ENCODE measurements at regions of chr10 and their contacts with region 1.

Region 1: GRCh38 chr10:122565728-122566206 is 5.2 kb downstream of the DMBT1 start:
- DNase-seq: peak; percentile 86
- H3K4me3 ChIP-seq: no peak overlapping the region
- H3K27ac ChIP-seq: no peak overlapping the region
- H3K4me1 ChIP-seq: peaks cover 6% of the 10 kb centered on the region
- H3K27me3 ChIP-seq: peaks cover 41% of the 10 kb centered on the region
- CTCF ChIP-seq: peak; percentile 87

Region 2: GRCh38 chr10:122191936-122192541 is 373.7 kb before region 1 on chr10:
- CTCF ChIA-PET with region 1: no interaction called
- POLR2A ChIA-PET with region 1: no interaction called
- intact Hi-C with region 1: no loop called
- DNase-seq: no peak
- H3K4me3 ChIP-seq: no peak overlapping the region
- H3K27ac ChIP-seq: no peak overlapping the region
- H3K4me1 ChIP-seq: no peaks in the 10 kb centered on the region
- H3K27me3 ChIP-seq: no peaks in the 10 kb centered on the region
- CTCF ChIP-seq: no peak

Region 3: DNA sequence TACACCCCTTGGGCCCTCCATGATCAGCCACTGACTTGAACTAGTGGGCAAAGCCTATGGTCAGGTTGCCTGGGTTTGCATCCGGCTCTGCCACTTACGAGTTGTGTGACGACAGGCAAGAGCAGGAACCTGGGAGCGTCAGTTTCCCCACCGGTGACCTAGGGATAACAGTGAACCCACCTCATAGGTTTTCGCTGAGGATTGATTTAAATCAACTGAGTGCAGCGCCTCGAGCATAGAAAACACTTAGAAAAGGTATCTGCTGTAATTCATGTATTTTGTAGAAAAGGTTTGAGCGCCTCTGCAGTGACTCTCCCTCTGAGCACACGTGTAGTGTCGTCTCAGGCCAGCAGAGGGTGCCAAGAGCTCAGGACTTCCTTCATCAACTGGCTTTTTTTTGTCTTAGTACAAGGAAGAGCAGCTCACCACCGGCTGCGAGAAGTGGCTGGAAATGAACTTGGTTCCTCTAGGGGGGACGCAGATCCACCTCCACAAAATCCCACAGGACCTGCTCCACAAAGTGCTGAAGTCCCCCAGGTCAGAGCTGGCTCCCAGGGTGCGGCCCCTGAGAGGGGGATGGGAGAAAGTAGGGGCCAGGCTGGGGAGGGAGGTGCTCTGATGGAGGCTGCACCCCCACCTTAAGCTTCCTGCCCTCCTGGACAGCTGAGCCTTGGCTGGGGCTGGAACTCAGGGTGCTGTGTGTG is 267.0 kb before region 1 on chr10:
- CTCF ChIA-PET with region 1: interaction called, 20 read pairs
- POLR2A ChIA-PET with region 1: no interaction called
- intact Hi-C with region 1: loop called (anchors 1 kb)
- DNase-seq: peak; percentile 79
- H3K4me3 ChIP-seq: no peak overlapping the region
- H3K27ac ChIP-seq: no peak overlapping the region
- H3K4me1 ChIP-seq: no peaks in the 10 kb centered on the region
- H3K27me3 ChIP-seq: no peaks in the 10 kb centered on the region
- CTCF ChIP-seq: peak; percentile 86

Region 4: GRCh38 chr10:122342293-122343134 is 223.3 kb before region 1 on chr10:
- CTCF ChIA-PET with region 1: interaction called, 9 read pairs
- POLR2A ChIA-PET with region 1: no interaction called
- intact Hi-C with region 1: loop called (anchors 1 kb)
- DNase-seq: peak; percentile 60
- H3K4me3 ChIP-seq: no peak overlapping the region
- H3K27ac ChIP-seq: no peak overlapping the region
- H3K4me1 ChIP-seq: no peaks in the 10 kb centered on the region
- H3K27me3 ChIP-seq: no peaks in the 10 kb centered on the region
- CTCF ChIP-seq: peak; percentile 70

Region 5: DNA sequence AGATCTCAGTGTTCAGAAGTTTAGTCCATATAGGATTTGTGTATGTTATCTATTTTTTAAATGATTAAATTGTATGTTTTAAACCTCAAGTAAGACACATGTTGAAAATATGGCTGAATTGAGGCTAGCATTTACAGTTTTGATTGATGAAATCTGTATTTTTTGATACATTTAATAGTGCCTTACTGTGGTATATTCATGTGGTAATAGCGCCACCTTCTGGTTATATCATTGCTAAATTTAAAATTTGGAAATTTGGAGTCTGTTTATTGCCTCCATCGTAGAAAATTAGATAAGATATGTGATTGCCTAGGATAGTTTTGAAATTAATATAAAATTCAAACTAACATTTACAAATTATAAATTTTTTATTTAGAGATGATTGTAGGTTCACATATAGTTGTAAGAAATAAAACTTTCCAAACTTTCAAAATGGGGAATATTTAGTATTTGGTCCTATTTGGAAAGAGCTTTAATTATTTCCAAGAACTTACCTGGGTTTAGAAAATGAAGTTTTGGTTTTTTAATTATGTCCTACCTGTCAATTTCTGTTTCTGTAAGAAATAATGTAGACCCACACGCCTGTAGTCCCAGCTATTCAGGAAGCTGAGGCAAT is 130.4 kb before region 1 on chr10:
- CTCF ChIA-PET with region 1: no interaction called
- POLR2A ChIA-PET with region 1: no interaction called
- intact Hi-C with region 1: loop called (anchors 5 kb)
- DNase-seq: peak; percentile 64
- H3K4me3 ChIP-seq: no peak overlapping the region
- H3K27ac ChIP-seq: no peak overlapping the region
- H3K4me1 ChIP-seq: no peaks in the 10 kb centered on the region
- H3K27me3 ChIP-seq: no peaks in the 10 kb centered on the region
- CTCF ChIP-seq: peak; percentile 72

Region 6: DNA sequence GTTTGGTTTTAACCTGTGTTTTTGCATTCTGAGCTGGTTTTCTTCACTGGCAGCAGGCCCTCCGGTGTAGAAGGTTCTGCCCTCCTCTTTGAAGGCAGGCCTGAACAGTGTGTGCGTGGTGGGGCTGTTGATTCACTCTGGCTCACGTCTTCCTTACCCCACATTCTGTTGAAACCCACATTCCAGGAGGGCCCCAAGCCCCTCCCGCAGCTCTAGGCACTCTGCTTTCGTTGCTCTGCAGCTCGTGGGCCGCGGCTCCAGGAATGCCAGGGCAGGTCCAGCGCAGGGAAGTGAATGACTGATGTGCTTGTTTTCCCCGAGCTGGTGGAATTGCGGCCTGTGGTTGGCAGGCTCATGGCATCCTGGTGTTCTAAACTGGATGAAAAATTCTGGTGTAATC is 55.4 kb before region 1 on chr10:
- CTCF ChIA-PET with region 1: interaction called, 3 read pairs
- POLR2A ChIA-PET with region 1: no interaction called
- intact Hi-C with region 1: loop called (anchors 5 kb)
- DNase-seq: no peak
- H3K4me3 ChIP-seq: no peak overlapping the region
- H3K27ac ChIP-seq: no peak overlapping the region
- H3K4me1 ChIP-seq: no peaks in the 10 kb centered on the region
- H3K27me3 ChIP-seq: no peaks in the 10 kb centered on the region
- CTCF ChIP-seq: no peak

Region 7: DNA sequence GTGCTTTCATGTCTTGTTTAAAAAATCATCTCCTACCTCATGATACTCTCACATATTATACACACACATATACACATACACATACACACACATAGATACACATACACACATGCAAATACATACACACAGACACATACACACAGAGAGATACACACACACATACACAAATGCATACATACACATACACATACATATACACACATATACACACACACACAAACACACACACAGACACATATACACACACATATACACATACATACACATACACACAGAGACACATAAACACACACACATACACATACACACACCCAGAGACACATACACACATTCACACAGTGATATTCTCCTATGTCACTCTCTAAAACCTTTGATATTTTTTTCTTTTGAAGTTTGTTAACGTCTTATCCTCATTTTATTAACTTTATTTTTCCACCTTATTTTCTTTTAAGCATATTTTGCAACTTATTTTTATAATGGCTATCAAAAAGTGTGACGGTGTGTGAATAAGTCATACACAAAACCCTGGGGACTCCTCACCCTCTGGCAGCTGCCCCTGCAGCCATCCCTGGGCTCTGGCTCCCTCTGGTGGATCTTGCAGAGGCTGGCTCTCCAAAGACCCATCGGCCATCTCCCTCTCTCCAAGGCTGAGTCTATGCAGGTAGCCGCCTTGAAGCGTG is 137.8 kb after region 1 on chr10:
- CTCF ChIA-PET with region 1: no interaction called
- POLR2A ChIA-PET with region 1: no interaction called
- intact Hi-C with region 1: loop called (anchors 2 kb)
- DNase-seq: peak; percentile 70
- H3K4me3 ChIP-seq: no peak overlapping the region
- H3K27ac ChIP-seq: no peak overlapping the region
- H3K4me1 ChIP-seq: no peaks in the 10 kb centered on the region
- H3K27me3 ChIP-seq: peaks cover 12% of the 10 kb centered on the region
- CTCF ChIP-seq: peak; percentile 82